Common myeloid progenitor, CD34-positive (primary cell): ENCODE measurements at regions of chr12 and their contacts with region 1.

Region 1: DNA sequence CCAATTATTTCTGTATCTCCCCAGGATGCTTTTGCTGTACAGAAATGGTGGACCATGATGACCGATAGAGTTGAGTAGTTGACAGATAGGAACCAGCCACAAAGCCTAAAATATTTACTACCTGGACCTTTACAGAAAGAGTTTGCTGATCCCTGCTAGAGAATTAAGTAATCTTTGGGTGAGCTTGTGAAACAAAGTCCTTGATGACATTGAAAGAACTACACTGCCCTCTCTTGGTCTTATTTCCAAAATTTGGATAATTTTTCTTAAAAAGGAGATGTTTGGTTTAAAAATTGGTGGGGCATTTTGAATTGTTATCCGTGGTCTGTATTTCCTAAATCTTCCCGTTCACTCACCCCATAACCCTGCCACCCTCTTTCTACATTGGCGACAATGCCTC is 13.7 kb upstream of the TCTN1 start:
- DNase-seq: peak; percentile 70 to 81 (median 74)
- H3K4me3 ChIP-seq: no peak overlapping the region
- H3K27ac ChIP-seq: no peak overlapping the region
- H3K4me1 ChIP-seq: peaks cover 2 to 13% (median 11%) of the 10 kb centered on the region in 4 experiments
- H3K27me3 ChIP-seq: no peaks in the 10 kb centered on the region

Region 2: DNA sequence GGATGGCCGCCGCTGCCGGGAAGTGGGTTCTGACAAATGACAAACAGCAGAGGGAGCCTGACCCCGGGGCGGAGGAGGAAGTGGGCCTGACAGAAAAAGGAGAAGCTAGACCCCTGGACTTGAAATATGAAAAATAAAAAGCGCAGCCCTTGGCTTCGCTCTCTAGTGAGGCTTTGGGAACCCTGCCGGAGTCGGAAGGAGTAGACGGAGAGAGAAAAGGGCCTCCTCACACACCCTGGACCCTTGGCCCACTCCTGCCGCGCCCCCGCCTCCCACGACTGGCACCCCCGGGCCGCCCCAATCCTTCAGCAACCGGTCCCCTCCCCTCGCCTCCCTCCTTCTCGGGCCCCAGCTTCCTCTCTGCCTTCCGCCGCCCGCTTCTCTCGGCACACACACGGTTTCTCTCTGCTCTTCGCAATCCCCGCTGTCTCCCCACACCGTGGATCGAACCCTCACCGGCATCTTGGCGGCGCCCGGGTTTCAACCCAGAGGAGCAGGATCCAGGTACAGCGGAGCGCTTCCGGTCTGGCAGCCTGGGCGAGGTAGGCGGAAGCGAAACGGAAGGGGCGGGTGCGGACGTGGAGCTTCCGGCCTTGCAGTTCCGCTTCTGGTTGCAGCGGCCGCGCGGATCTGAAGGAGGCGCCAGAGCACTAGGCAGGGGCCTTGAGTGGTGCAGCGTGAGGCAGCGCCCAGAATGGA is 150.3 kb before region 1 on chr12 and contains the start of gene ARPC3:
- CTCF ChIA-PET with region 1: interaction called, 85 read pairs
- POLR2A ChIA-PET with region 1: interaction called, 5 read pairs
- DNase-seq: peak; percentile 96 to 98 (median 97)
- H3K4me3 ChIP-seq: peak within 1 kb of the TSS; percentile 74 to 96 (median 89)
- H3K27ac ChIP-seq: peak within 1 kb of the TSS; percentile 98 to 99
- H3K4me1 ChIP-seq: peaks cover 5 to 36% (median 23%) of the 10 kb centered on the region in 4 experiments
- H3K27me3 ChIP-seq: no peaks in the 10 kb centered on the region

Region 3: GRCh38 chr12:110508071-110508586 is 92.1 kb before region 1 on chr12:
- CTCF ChIA-PET with region 1: interaction called, 125 read pairs
- POLR2A ChIA-PET with region 1: no interaction called
- DNase-seq: no peak
- H3K4me3 ChIP-seq: no peak overlapping the region
- H3K27ac ChIP-seq: no peak overlapping the region
- H3K4me1 ChIP-seq: no peaks in the 10 kb centered on the region
- H3K27me3 ChIP-seq: no peaks in the 10 kb centered on the region

Region 4: GRCh38 chr12:110543252-110543959 is 56.8 kb before region 1 on chr12:
- CTCF ChIA-PET with region 1: interaction called, 280 read pairs
- POLR2A ChIA-PET with region 1: no interaction called
- DNase-seq: no peak
- H3K4me3 ChIP-seq: no peak overlapping the region
- H3K27ac ChIP-seq: peak overlapping the region in 1 of 2 experiments; percentile 29
- H3K4me1 ChIP-seq: no peaks in the 10 kb centered on the region
- H3K27me3 ChIP-seq: no peaks in the 10 kb centered on the region

Region 5: DNA sequence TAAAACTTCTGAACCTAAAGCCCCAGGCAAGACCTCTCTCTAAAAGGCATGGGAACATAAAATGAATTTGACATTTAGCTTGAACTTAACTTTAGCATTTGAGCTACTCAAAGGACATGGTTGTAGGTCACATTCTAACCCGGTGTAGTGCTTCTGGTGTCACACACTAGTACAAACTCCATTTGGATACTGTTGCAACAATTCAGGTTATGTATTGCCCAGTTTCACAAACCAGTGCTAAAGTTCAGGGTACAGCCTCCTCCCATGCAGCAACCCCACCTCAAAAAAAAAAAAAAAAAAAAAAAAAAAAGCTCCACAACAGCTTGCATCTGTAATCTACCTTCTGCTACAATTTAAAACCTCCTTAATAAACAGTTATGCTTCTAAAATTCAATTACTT is 24.9 kb before region 1 on chr12:
- CTCF ChIA-PET with region 1: interaction called, 16 read pairs
- POLR2A ChIA-PET with region 1: no interaction called
- DNase-seq: no peak
- H3K4me3 ChIP-seq: no peak overlapping the region
- H3K27ac ChIP-seq: no peak overlapping the region
- H3K4me1 ChIP-seq: peaks cover 8 to 40% (median 25%) of the 10 kb centered on the region in 4 experiments
- H3K27me3 ChIP-seq: no peaks in the 10 kb centered on the region

Region 6: GRCh38 chr12:110613771-110614684 is 13.8 kb after region 1 on chr12 and contains the start of gene TCTN1:
- CTCF ChIA-PET with region 1: interaction called, 36 read pairs
- POLR2A ChIA-PET with region 1: interaction called, 5 read pairs
- DNase-seq: peak; percentile 92 to 96 (median 95)
- H3K4me3 ChIP-seq: peak within 1 kb of the TSS; percentile 35 to 86 (median 72)
- H3K27ac ChIP-seq: peak within 1 kb of the TSS; percentile 69 to 86
- H3K4me1 ChIP-seq: peaks cover 0 to 13% (median 8%) of the 10 kb centered on the region in 4 experiments
- H3K27me3 ChIP-seq: no peaks in the 10 kb centered on the region

Region 7: DNA sequence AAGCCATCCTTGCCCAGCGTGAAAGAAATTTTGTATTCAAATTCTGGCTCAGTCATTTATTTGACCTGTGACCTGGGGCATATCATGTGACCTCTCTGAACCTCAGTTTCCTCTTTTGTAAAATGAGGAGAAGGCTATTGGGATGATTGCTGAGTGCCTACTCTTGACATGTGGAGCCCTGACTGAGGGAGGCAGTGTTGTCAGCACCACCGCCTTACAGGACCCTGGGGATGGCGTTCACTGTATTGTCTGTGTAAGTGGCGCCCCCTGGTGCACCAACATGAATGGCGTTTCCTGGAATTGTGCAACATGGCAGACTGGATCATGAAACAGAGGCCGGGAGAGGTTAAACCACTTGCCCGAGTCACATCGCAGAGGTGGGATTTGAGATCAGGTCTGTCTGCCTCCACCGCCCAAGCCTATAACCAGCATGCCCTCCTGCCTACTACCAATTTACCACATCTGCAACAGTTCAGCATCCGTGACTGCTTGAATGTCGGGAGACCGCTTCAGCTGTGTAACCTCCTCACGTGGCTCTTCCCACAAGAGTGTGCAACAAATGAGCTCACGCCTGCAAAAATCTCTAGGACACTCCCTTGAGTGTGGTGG is 226.4 kb after region 1 on chr12:
- CTCF ChIA-PET with region 1: interaction called, 11 read pairs
- POLR2A ChIA-PET with region 1: no interaction called
- DNase-seq: peak; percentile 88 to 90 (median 89)
- H3K4me3 ChIP-seq: peak overlapping the region in 2 of 7 experiments; percentile 55 to 72
- H3K27ac ChIP-seq: no peak overlapping the region
- H3K4me1 ChIP-seq: peaks cover 0 to 3% (median 1%) of the 10 kb centered on the region in 4 experiments
- H3K27me3 ChIP-seq: no peaks in the 10 kb centered on the region

Region 8: GRCh38 chr12:110874781-110875180 is 274.5 kb after region 1 on chr12:
- CTCF ChIA-PET with region 1: no interaction called
- POLR2A ChIA-PET with region 1: no interaction called
- DNase-seq: no peak
- H3K4me3 ChIP-seq: no peak overlapping the region
- H3K27ac ChIP-seq: no peak overlapping the region
- H3K4me1 ChIP-seq: no peaks in the 10 kb centered on the region
- H3K27me3 ChIP-seq: no peaks in the 10 kb centered on the region